ENCODE measurements at regions of chr10 and their contacts with region 1.

Region 1: GRCh38 chr10:88138319-88138848 is 275.0 kb downstream of the PTEN start:
- DNase-seq: no peak
- H3K4me3 Mint-ChIP-seq: no peak overlapping the region
- H3K27ac Mint-ChIP-seq: no peak overlapping the region
- H3K4me1 Mint-ChIP-seq: peaks cover 24% of the 10 kb centered on the region
- H3K27me3 Mint-ChIP-seq: peaks cover 22% of the 10 kb centered on the region

Region 2: GRCh38 chr10:88091490-88092105 is 46.8 kb before region 1 on chr10:
- intact Hi-C with region 1: loop called (anchors 1 kb)
- DNase-seq: peak; percentile 71
- H3K4me3 Mint-ChIP-seq: no peak overlapping the region
- H3K27ac Mint-ChIP-seq: no peak overlapping the region
- H3K4me1 Mint-ChIP-seq: peaks cover 34% of the 10 kb centered on the region
- H3K27me3 Mint-ChIP-seq: peaks cover 56% of the 10 kb centered on the region

Region 3: GRCh38 chr10:88172159-88172558 is 33.8 kb after region 1 on chr10:
- intact Hi-C with region 1: loop called (anchors 5 kb)
- DNase-seq: no peak
- H3K4me3 Mint-ChIP-seq: no peak overlapping the region
- H3K27ac Mint-ChIP-seq: no peak overlapping the region
- H3K4me1 Mint-ChIP-seq: peaks cover 33% of the 10 kb centered on the region
- H3K27me3 Mint-ChIP-seq: peaks cover 22% of the 10 kb centered on the region

Region 4: GRCh38 chr10:88389456-88389855 is 251.1 kb after region 1 on chr10:
- intact Hi-C with region 1: loop called (anchors 2 kb)
- DNase-seq: no peak
- H3K4me3 Mint-ChIP-seq: no peak overlapping the region
- H3K27ac Mint-ChIP-seq: no peak overlapping the region
- H3K4me1 Mint-ChIP-seq: peaks cover 29% of the 10 kb centered on the region
- H3K27me3 Mint-ChIP-seq: no peaks in the 10 kb centered on the region